ENCODE measurements at regions of chr6 and their contacts with region 1.

Region 1: DNA sequence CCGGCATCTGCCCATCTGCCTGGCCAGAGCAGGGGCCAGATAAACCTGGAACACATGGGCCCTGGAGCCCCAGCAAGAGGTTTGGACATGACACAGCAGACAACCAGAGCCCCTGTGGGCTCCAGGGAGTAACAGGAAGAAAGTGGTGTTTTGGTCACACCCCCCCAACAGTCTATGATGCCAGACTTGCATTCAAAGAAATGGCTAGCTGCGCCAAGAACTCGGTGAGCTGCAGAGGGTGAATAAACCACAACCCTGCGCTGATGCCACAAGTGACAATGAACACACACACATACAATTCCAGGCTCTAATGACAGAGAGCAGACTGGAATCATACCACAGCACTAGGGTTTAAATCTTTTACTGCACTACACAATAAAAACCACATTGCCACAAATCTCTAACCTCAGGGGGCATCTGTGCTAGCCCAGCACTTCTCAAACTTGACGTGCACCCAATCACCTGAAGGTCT is 34.0 kb downstream of the TRERF1 start:
- DNase-seq: peak in 13 of 14 experiments; percentile 12 to 80 (median 30)
- ATAC-seq: peak; percentile 89
- H3K4me3 ChIP-seq: no peak overlapping the region
- H3K4me3 Mint-ChIP-seq: peak overlapping the region; percentile 53
- H3K27ac ChIP-seq: no peak overlapping the region
- H3K27ac Mint-ChIP-seq: peak overlapping the region; percentile 72
- H3K4me1 ChIP-seq: peaks cover 37% of the 10 kb centered on the region
- H3K4me1 Mint-ChIP-seq: peaks cover 70% of the 10 kb centered on the region
- H3K27me3 ChIP-seq: no peaks in the 10 kb centered on the region
- H3K27me3 Mint-ChIP-seq: no peaks in the 10 kb centered on the region
- CTCF ChIP-seq: no peak

Region 2: GRCh38 chr6:42367353-42368011 is 50.2 kb before region 1 on chr6:
- CTCF ChIA-PET with region 1: no interaction called
- POLR2A ChIA-PET with region 1: interaction called, 8 read pairs
- intact Hi-C with region 1: loop called in 1 of 2 experiments (anchors 5 kb)
- DNase-seq: peak in 6 of 14 experiments; percentile 4 to 74 (median 51)
- ATAC-seq: peak; percentile 57
- H3K4me3 ChIP-seq: peak overlapping the region; percentile 36
- H3K4me3 Mint-ChIP-seq: peak overlapping the region; percentile 84
- H3K27ac ChIP-seq: peak overlapping the region; percentile 71 to 74
- H3K27ac Mint-ChIP-seq: peak overlapping the region; percentile 94
- H3K4me1 ChIP-seq: peaks cover 67% of the 10 kb centered on the region
- H3K4me1 Mint-ChIP-seq: peaks cover 80% of the 10 kb centered on the region
- H3K27me3 ChIP-seq: no peaks in the 10 kb centered on the region
- H3K27me3 Mint-ChIP-seq: no peaks in the 10 kb centered on the region
- CTCF ChIP-seq: no peak

Region 3: GRCh38 chr6:42402184-42402583 is 15.5 kb before region 1 on chr6:
- CTCF ChIA-PET with region 1: interaction called, 3 read pairs
- POLR2A ChIA-PET with region 1: interaction called, 10 read pairs
- intact Hi-C with region 1: no loop called
- DNase-seq: peak in 6 of 14 experiments; percentile 8 to 52 (median 48)
- ATAC-seq: peak; percentile 47
- H3K4me3 ChIP-seq: no peak overlapping the region
- H3K4me3 Mint-ChIP-seq: no peak overlapping the region
- H3K27ac ChIP-seq: no peak overlapping the region
- H3K27ac Mint-ChIP-seq: peak overlapping the region; percentile 81
- H3K4me1 ChIP-seq: peaks cover 70% of the 10 kb centered on the region
- H3K4me1 Mint-ChIP-seq: peaks cover 86% of the 10 kb centered on the region
- H3K27me3 ChIP-seq: no peaks in the 10 kb centered on the region
- H3K27me3 Mint-ChIP-seq: no peaks in the 10 kb centered on the region
- CTCF ChIP-seq: no peak

Measured in CD4-positive, alpha-beta T cell (primary cell).